Caco-2 (cell line): ENCODE measurements at regions of chr11 and their contacts with region 1.

Region 1: GRCh38 chr11:12122083-12122482 is 11.7 kb downstream of the MICAL2 start:
- DNase-seq: peak; percentile 52 to 57
- H3K4me3 ChIP-seq: no peak overlapping the region
- H3K4me3 Mint-ChIP-seq: no peak overlapping the region
- H3K27ac Mint-ChIP-seq: no peak overlapping the region
- H3K4me1 ChIP-seq: peaks cover 86% of the 10 kb centered on the region
- H3K4me1 Mint-ChIP-seq: peaks cover 78% of the 10 kb centered on the region
- H3K27me3 ChIP-seq: no peaks in the 10 kb centered on the region
- H3K27me3 Mint-ChIP-seq: no peaks in the 10 kb centered on the region
- CTCF ChIP-seq: peak; percentile 59 to 60

Region 2: DNA sequence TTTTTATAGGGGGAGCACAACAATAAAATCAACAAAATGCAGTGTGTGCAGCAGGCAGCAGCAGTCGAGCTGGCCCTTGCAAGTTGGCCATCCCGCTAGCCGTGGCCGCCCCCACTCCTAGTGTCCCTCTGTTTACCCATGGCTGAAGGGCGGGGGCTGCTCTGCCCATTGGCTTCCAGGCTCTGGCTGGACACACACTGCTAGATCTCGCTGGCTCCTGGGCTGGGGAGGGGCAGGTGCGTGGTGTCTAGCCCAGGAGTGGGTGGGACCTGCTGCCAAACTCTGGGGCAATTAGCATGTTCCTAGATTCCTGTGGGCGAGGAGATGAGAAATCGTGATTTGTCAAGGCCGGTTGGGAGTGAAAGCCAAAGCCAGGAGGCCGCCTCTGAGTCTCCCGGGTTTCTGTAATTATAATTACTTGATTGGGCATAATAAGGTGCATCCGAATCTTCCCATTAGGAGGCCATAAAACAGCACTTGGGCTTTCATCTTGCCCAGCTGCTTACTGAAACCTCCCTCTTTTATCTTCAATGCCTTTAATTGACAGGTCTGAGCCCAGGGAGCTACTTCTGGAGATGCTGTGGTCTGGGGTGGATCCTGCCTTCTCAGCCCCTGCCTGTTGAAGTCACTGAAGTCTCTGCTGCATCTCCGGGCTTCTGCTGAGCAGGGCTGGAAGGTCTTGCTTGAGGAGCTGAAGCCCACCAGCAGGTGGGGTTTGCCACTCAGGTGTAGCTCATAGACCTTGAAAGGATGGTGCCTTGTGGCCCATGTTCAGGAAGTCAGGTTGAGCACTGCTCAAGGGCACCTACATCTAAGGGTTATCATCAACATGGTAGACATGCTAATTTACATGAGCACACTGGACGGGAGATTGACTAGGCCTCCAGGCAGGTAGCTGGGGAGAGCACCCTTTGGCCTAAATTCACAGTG is 69.1 kb before region 1 on chr11:
- CTCF ChIA-PET with region 1: no interaction called
- POLR2A ChIA-PET with region 1: no interaction called
- intact Hi-C with region 1: no loop called
- DNase-seq: peak; percentile 49 to 66
- H3K4me3 ChIP-seq: no peak overlapping the region
- H3K4me3 Mint-ChIP-seq: no peak overlapping the region
- H3K27ac Mint-ChIP-seq: peak overlapping the region; percentile 49
- H3K4me1 ChIP-seq: peaks cover 14% of the 10 kb centered on the region
- H3K4me1 Mint-ChIP-seq: peaks cover 34% of the 10 kb centered on the region
- H3K27me3 ChIP-seq: no peaks in the 10 kb centered on the region
- H3K27me3 Mint-ChIP-seq: no peaks in the 10 kb centered on the region
- CTCF ChIP-seq: peak in 1 of 2 experiments; percentile 31

Region 3: DNA sequence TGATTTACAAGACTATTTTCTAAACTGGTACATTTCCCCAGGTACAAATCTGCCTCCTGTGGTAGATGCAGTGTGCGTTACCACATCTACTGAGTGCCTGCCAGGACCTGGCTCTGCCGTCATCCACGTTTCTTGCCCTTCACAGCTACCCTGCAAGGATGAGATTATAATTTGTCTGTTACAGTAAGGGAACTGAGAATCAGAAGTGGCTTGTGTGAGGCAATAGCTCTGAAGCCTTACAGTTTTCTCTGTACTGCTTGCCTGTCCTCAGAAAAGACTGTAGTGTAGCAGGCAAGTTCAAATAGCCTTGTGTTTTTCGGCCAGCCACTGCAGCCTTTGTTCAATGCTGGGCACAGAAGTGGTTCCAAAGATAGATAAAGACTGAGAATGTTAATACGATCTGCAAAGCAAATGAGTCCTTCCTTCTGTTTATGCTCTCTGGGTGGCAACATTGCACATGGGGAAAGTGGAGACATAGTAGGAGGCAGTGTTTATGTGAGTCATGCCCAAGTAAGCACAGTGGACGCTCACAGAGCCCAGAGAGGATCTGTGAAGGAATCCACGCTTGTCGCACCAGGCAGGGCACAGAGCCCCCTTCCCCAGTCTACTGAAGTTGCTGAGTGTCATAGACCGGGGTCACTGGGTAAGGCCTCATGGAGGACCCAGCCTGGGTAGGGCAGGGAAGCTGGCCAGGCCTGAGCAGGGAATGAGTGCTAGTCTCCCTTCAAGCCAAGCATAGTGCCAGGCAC is 37.4 kb after region 1 on chr11:
- CTCF ChIA-PET with region 1: interaction called, 3 read pairs
- POLR2A ChIA-PET with region 1: interaction called, 3 read pairs
- intact Hi-C with region 1: loop called (anchors 2 kb)
- DNase-seq: no peak
- H3K4me3 ChIP-seq: no peak overlapping the region
- H3K4me3 Mint-ChIP-seq: no peak overlapping the region
- H3K27ac Mint-ChIP-seq: peak overlapping the region; percentile 83
- H3K4me1 ChIP-seq: peaks cover 67% of the 10 kb centered on the region
- H3K4me1 Mint-ChIP-seq: peaks cover 63% of the 10 kb centered on the region
- H3K27me3 ChIP-seq: no peaks in the 10 kb centered on the region
- H3K27me3 Mint-ChIP-seq: no peaks in the 10 kb centered on the region
- CTCF ChIP-seq: no peak

Region 4: GRCh38 chr11:12174477-12175143 is 52.5 kb after region 1 on chr11:
- CTCF ChIA-PET with region 1: no interaction called
- POLR2A ChIA-PET with region 1: no interaction called
- intact Hi-C with region 1: loop called (anchors 5 kb)
- DNase-seq: no peak
- H3K4me3 ChIP-seq: no peak overlapping the region
- H3K4me3 Mint-ChIP-seq: no peak overlapping the region
- H3K27ac Mint-ChIP-seq: peak overlapping the region; percentile 94
- H3K4me1 ChIP-seq: peaks cover 73% of the 10 kb centered on the region
- H3K4me1 Mint-ChIP-seq: peaks cover 45% of the 10 kb centered on the region
- H3K27me3 ChIP-seq: no peaks in the 10 kb centered on the region
- H3K27me3 Mint-ChIP-seq: no peaks in the 10 kb centered on the region
- CTCF ChIP-seq: no peak